ENCODE measurements at regions of chr5 and their contacts with region 1.

Region 1: GRCh38 chr5:138953387-138954256 is 78.5 kb upstream of the LRRTM2 start:
- DNase-seq: peak; percentile 95

Region 2: GRCh38 chr5:138927979-138928378 is 25.6 kb before region 1 on chr5:
- intact Hi-C with region 1: loop called (anchors 2 kb)
- DNase-seq: peak; percentile 86

Region 3: GRCh38 chr5:138974227-138975063 is 20.8 kb after region 1 on chr5:
- intact Hi-C with region 1: loop called (anchors 1 kb)
- DNase-seq: peak; percentile 79